ENCODE measurements at regions of chr6 and their contacts with region 1.

Region 1: DNA sequence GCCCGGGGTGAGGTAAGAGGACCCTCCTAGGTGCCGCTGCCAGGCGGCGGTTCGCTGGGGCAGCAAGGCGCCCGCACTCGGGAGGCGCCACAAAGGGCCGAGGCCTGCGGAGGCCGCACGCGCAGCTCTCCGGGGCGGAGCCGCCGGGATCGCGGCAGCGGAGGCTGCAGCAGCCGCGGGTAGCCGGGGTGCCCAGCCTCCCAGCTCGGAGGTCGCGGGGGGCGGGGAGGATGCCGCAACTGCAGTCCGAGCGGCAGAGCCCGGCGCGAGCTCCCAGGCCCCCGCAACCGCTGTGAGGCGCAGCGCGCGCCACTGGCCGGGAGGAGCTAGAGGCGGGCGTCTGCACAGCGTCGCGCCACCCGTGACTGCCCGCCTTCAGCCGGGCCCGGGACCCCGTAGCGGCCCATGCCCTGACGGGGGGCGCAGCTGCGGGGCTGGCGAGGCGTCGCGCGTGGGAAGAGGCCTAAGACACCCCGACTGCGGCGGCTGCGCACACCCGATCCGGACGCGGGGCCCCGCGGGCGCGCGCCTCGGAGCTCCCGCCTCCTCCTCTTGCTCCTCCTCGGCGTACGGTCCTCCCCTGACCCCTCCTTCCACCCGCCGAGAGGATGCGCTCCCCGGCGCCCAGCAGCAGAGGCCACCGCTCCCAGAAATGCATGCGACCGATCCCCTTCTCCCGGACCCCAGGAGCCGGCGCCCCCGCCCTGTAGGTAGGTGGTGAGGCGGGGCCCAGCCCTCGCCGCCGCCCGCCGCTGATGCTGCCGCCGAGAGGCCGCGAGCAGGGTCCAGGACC is at the start of gene NCOA7:
- DNase-seq: no peak
- H3K4me3 ChIP-seq: peak within 1 kb of the TSS; percentile 72
- CTCF ChIP-seq: peak; percentile 11

Region 2: GRCh38 chr6:125779924-125780539 is 10.5 kb before region 1 on chr6:
- CTCF ChIA-PET with region 1: interaction called, 29 read pairs
- POLR2A ChIA-PET with region 1: interaction called, 39 read pairs
- DNase-seq: no peak
- H3K4me3 ChIP-seq: peak overlapping the region; percentile 73
- CTCF ChIP-seq: no peak

Region 3: GRCh38 chr6:125807293-125807692 is 16.7 kb after region 1 on chr6:
- CTCF ChIA-PET with region 1: interaction called, 11 read pairs
- POLR2A ChIA-PET with region 1: no interaction called
- DNase-seq: no peak
- H3K4me3 ChIP-seq: no peak overlapping the region
- CTCF ChIP-seq: no peak

Region 4: DNA sequence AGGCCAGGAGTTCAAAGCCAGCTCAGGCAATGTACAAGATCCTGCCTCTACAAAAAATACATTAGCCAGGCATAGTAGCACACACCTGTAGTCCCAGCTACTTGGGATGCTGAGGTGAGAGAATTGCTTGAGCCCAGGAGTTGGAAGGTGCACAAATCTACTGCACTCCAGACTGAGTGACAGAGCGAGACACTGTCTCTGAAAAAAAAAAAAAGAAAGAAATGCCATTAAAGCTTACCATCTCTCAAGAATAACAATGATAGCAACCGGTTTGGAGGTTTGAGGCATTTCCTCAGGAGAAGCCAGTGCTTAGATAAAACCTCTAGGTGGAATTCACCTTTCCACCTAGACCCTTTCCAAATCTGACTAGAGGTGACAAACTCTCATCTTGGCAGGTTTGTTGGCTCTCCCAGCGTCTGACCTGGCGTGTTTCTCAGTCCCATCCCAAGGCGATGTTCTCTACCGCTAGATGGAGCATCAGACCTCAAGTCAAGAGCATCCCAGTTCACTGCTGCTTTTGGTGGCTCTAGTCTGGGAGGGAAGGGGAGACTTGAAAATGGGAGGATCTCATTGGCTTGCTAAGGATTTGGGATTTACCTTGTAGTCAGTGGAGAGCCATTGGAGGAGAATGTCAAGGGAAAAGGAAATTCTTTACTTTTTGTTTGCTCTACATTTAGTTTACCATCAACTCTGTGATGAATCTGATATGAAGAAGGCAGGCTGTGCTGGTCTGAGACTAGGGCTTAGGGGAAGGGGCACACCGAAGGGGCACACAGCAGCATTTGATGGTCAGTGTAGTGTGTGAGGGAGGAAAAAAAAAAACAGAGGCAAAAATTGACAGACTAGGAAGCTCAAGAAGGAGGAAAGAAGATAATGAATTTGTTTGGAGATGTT is 68.1 kb after region 1 on chr6:
- CTCF ChIA-PET with region 1: interaction called, 16 read pairs
- POLR2A ChIA-PET with region 1: interaction called, 3 read pairs
- DNase-seq: no peak
- H3K4me3 ChIP-seq: no peak overlapping the region
- CTCF ChIP-seq: peak; percentile 88

Region 5: DNA sequence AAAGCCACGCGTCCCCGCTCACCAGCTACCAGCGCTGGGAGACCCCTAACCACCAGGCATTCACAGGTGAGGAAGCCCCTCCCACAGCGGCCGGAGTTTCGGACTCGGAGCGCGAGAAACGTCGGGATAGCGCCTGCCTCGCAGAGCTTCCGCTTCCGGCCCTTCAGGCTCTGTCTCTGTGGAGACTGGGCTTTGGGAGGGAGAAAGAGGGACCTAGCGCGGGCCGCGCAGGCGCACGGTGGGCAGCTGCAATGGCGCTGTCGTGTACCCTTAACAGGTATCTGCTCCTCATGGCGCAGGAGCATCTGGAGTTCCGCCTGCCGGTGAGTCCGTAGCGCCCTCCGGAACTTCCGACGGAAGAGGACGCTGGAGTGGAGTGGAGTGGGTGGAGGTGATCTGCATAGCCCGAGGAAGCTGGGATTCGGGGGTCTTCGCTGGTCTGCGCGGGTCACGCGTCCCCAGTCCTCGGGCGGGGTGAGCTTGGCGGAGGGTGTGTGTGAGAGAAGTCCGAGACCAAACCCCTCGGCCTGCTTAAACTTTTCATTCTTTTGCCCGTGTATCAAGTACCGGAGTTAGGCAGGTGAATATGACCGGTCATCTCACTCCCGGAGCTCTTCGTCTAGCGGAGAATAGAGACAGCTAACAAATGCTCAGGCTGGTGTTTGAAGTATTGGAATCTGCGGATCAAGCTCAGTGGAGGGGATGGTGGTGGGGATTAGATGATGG is 195.9 kb after region 1 on chr6 and contains the start of gene TRMT11:
- CTCF ChIA-PET with region 1: interaction called, 10 read pairs
- POLR2A ChIA-PET with region 1: interaction called, 7 read pairs
- DNase-seq: no peak
- H3K4me3 ChIP-seq: peak within 1 kb of the TSS; percentile 95
- CTCF ChIP-seq: no peak

Measured in AG04449 (cell line).